Activated naive CD4-positive, alpha-beta T cell treated with anti-CD3 and anti-CD28 coated beads for 36 hours (primary cell): ENCODE measurements at regions of chr3 and their contacts with region 1.

Region 1: DNA sequence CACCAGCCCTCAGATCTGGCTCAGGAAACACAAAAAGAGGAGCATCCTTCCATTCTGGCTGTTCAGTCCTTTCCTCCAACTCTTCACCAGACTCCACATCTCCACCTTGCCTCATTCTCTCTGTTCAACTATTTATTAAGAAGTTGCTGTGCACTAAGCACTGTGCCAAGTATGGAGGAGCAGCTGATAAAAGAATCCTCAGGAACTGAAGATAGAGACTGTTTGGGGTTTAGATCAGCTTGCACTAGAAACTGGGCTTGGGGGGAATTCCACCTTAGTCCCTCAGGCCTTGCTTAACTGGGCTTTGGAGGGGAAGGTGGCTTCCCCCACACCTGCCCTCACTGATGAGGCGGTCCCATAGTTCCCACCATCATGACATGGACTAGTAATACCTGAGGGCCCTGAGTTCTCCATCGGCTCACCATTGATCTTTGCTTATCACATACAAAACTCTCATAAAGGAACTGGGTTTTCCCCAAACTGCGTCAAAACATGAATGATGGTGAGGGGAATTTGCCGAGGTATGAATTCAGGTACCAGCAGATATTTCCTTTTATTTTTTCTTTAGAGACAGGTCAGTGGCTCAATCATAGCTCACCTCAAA is 1.7 kb upstream of the CCR8 start:
- DNase-seq: peak; percentile 60
- H3K4me3 Mint-ChIP-seq: no peak overlapping the region
- H3K27ac Mint-ChIP-seq: no peak overlapping the region
- H3K4me1 Mint-ChIP-seq: peaks cover 30% of the 10 kb centered on the region
- H3K27me3 Mint-ChIP-seq: no peaks in the 10 kb centered on the region

Region 2: GRCh38 chr3:39255503-39256325 is 72.1 kb before region 1 on chr3:
- CTCF ChIA-PET with region 1: no interaction called
- intact Hi-C with region 1: loop called (anchors 1 kb)
- DNase-seq: peak; percentile 61
- H3K4me3 Mint-ChIP-seq: no peak overlapping the region
- H3K27ac Mint-ChIP-seq: peak overlapping the region; percentile 72
- H3K4me1 Mint-ChIP-seq: peaks cover 19% of the 10 kb centered on the region
- H3K27me3 Mint-ChIP-seq: peaks cover 3% of the 10 kb centered on the region

Region 3: GRCh38 chr3:39315420-39315819 is 12.4 kb before region 1 on chr3:
- CTCF ChIA-PET with region 1: no interaction called
- intact Hi-C with region 1: loop called (anchors 1 kb)
- DNase-seq: no peak
- H3K4me3 Mint-ChIP-seq: no peak overlapping the region
- H3K27ac Mint-ChIP-seq: no peak overlapping the region
- H3K4me1 Mint-ChIP-seq: peaks cover 9% of the 10 kb centered on the region
- H3K27me3 Mint-ChIP-seq: no peaks in the 10 kb centered on the region

Region 4: GRCh38 chr3:39346785-39347585 is 19.1 kb after region 1 on chr3:
- CTCF ChIA-PET with region 1: interaction called, 3 read pairs
- intact Hi-C with region 1: loop called (anchors 1 kb)
- DNase-seq: peak; percentile 20
- H3K4me3 Mint-ChIP-seq: no peak overlapping the region
- H3K27ac Mint-ChIP-seq: peak overlapping the region; percentile 37
- H3K4me1 Mint-ChIP-seq: peaks cover 43% of the 10 kb centered on the region
- H3K27me3 Mint-ChIP-seq: no peaks in the 10 kb centered on the region